Kidney (tissue), 22 donors: ENCODE measurements at regions of chr11 and their contacts with region 1.

Region 1: DNA sequence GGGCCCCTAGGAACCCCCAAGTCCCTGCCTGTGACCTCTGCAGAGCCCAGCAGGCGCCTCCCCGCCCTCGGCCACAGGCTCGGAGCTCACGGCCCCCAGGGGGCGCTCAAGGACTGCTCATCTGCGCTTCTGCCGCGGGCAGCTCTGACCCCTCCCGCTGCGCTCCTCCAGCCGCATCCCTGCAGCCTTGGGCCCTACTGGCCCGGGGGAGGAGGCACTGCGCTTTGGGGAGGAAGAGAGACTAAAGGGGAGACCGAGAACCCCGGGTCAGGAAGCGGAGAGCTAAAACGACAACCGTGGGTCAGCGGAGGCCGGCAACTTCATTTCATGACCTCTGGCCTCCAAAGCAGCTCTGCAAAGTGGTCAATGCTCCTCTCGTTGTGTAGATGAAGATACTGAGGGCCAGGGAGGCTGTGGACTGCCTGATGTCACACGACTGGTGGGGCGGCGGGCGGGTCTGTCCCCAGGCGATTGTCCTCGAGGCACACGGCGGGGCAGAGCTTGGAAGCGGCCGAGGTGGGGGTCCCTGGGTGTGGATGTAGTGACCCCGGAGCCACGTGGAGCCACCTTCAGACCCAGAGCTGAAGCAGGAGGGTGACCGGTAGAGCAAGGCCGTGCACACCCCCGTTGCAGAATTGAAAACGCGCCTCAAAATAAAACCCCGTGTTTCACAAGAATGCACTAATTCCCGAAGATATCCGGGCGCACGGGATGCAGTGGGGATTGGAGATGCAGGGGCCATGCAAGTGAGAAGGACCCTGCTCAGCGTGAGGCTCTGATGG is 2.7 kb upstream of the KRTAP5-6 start:
- DNase-seq: peak; percentile 88 to 95 (median 92)
- H3K4me3 ChIP-seq: peak overlapping the region in 1 of 3 donors; percentile 52
- H3K27ac ChIP-seq: no peak overlapping the region
- H3K4me1 ChIP-seq: peaks cover 0 to 7% (median 4%) of the 10 kb centered on the region in 3 donors
- H3K27me3 ChIP-seq: no peaks in the 10 kb centered on the region
- CTCF ChIP-seq: peak; percentile 90

Region 2: DNA sequence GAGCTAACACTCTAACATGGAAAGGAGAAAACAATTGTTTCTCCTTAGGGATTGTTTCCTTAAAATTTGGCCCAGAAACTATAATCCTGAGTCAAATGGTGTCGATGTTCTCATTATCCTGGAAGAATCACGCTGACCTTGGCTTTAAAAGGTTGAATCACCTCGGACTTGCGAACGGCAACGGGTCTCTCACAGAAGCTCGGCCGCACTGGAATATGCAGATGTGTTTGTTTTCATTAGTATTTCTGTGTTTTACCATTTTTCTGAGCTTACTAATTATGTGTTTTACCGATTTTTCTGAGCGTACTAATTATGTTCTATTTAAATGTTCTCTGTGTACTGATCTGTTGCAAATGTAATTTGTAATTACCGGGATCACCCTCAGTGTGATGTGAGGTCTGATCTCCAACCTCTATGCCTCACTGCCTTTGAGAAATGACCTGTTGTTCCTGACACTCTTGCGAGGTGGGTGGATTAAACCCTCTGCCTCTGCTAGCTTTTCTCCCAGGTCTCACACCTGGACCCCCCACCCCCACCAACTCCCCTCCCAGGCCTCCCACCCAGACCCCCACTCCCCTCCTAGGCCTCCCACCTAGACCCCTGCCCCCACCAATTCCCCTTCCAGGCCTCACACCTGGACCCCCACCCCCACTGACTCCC is 342.8 kb before region 1 on chr11:
- intact Hi-C with region 1: no loop called
- DNase-seq: peak in 4 of 5 donors; percentile 53 to 80 (median 70)
- H3K4me3 ChIP-seq: no peak overlapping the region
- H3K27ac ChIP-seq: no peak overlapping the region
- H3K4me1 ChIP-seq: no peaks in the 10 kb centered on the region
- H3K27me3 ChIP-seq: no peaks in the 10 kb centered on the region
- CTCF ChIP-seq: no peak

Region 3: GRCh38 chr11:1749414-1750312 is 55.4 kb after region 1 on chr11:
- intact Hi-C with region 1: no loop called
- DNase-seq: peak in 1 of 5 donors; percentile 82
- H3K4me3 ChIP-seq: peak overlapping the region in 1 of 3 donors; percentile 12
- H3K27ac ChIP-seq: peak overlapping the region; percentile 63 to 67
- H3K4me1 ChIP-seq: peaks cover 0 to 44% (median 1%) of the 10 kb centered on the region in 3 donors
- H3K27me3 ChIP-seq: peaks cover 2% of the 10 kb centered on the region
- CTCF ChIP-seq: no peak

Region 4: DNA sequence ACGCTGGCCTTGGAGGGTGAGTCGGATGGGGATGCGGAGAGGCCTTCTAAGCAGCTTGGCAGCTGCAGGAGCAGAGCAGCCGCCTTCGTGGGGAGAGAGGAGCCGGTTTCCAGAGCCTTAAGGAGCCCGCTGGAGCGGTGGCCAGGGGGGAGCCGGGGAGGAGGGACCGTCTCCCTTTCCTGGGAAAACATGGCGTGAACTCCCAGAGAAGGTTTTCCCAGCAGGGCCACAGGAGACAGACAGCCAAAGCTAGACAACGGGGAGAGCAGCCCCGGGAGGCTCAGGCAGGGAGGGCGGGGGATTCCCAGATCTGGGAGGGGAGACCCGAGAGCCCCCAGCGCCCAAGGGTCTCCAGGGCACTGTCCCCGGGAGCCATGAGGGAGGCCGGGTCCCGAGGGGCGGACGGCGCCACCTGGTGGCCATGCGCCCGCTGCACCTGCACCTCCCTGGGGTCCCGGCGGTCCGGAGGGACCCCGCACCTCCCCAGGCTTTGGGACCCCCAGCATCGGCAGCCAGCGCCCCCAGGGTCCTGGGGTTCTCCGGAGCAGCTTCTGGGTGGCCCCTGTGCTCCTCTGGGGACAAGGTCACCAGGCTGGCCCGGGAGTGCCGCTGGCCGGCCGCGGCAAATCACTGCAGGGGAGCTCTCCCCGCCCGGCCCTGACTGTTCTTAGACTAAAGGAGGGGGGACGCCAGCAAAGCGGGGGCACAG is 138.1 kb after region 1 on chr11:
- intact Hi-C with region 1: loop called (anchors 5 kb)
- DNase-seq: peak; percentile 63 to 84 (median 74)
- H3K4me3 ChIP-seq: no peak overlapping the region
- H3K27ac ChIP-seq: no peak overlapping the region
- H3K4me1 ChIP-seq: peaks cover 0 to 10% (median 0%) of the 10 kb centered on the region in 3 donors
- H3K27me3 ChIP-seq: no peaks in the 10 kb centered on the region
- CTCF ChIP-seq: peak; percentile 83